Activated CD4-positive, alpha-beta T cell treated with anti-CD3 and anti-CD28 coated beads for 36 hours (primary cell): ENCODE measurements at regions of chr15 and their contacts with region 1.

Region 1: DNA sequence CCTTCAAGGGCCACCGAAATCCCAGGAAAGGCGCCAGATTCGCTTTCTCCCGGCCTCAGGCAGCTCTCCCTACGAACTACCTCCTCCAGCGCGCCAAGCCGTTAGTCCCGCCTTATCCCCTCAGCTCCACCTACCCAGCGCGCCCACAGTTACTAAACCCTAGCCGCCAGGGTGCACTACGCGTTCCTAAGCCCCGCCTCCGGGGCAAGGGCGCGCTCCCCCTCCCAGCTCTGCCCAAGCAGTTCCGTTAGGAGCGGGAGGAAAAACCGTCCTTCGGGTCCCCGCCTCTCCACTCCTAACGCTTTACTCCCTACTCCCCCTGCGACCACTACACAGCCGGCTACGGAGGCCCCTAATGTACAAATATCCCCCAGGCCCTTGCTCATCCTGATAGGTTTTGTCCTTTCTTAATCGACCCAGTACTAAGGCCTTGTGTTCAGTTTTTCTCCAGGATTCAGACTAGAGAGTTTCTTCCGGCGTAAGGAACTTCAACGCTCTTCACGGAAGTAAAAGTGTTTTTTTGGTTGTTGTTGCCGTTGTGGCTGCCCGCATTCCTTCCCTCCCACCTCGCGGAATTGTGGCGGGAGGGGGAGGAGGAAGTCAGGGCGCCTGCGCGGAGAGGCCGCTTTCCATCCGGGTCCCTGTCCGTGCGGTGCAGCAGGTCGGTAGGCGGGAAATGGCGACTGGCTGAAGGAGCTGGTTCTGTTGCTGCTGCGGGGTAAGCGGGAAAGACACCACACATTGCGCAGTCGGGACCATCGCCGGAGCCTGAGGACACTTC is at the start of gene CTDSPL2:
- DNase-seq: peak; percentile 97
- ATAC-seq: peak; percentile 98
- H3K4me3 Mint-ChIP-seq: peak within 1 kb of the TSS; percentile 98
- H3K27ac Mint-ChIP-seq: peak within 1 kb of the TSS; percentile 99
- H3K4me1 Mint-ChIP-seq: peaks cover 36% of the 10 kb centered on the region
- H3K27me3 Mint-ChIP-seq: no peaks in the 10 kb centered on the region
- total RNA-seq, gene CTDSPL2: 80.7 to 107 TPM

Region 2: DNA sequence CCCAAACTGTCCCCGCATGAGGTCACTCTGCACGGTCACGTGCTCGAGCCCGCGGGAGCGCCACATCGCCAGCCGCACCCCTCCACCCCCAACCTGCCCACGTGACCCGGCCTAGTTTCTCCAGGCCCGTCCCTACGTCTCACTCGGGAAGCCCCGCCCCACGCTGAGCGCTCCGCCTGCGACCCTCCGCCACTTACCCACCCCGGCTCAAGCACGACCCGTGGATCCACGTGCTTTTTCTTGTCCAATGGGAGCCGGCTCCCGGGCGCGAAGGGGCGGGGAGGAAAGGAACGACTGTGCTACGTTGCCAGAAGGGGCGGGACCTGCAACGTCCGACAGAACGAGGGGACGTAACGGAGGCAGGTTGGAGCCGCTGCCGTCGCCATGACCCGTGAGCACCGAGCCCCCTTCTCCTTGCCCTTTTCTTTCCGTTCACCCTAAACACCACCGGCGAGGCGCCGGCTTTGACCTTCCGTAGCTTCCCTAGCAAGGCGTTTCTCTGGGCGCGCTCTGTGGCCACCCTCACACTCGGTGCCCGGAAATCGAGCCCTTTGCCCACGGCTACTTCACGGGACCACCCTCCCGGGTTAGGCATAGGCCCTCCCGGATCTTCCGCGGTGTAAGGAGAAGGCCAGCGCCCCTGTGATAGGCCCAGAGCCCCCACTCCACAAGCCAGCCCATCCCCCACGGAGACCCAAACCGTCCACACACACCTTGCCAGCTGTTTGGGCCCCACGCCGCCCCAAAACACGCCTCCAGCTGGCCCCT is 635.0 kb before region 1 on chr15 and contains the start of gene SERF2:
- CTCF ChIA-PET with region 1: no interaction called
- POLR2A ChIA-PET with region 1: no interaction called
- intact Hi-C with region 1: loop called in 1 of 2 experiments (anchors 1 kb)
- DNase-seq: peak; percentile 100
- ATAC-seq: peak; percentile 98
- H3K4me3 Mint-ChIP-seq: peak within 1 kb of the TSS; percentile 97
- H3K27ac Mint-ChIP-seq: peak within 1 kb of the TSS; percentile 97
- H3K4me1 Mint-ChIP-seq: peaks cover 35% of the 10 kb centered on the region
- H3K27me3 Mint-ChIP-seq: no peaks in the 10 kb centered on the region
- total RNA-seq, gene SERF2: 710 to 718 TPM

Region 3: GRCh38 chr15:44308415-44308814 is 118.8 kb before region 1 on chr15:
- CTCF ChIA-PET with region 1: no interaction called
- POLR2A ChIA-PET with region 1: interaction called, 5 read pairs
- intact Hi-C with region 1: loop called (anchors 1 kb)
- DNase-seq: peak; percentile 62
- ATAC-seq: peak; percentile 90
- H3K4me3 Mint-ChIP-seq: peak overlapping the region; percentile 58
- H3K27ac Mint-ChIP-seq: peak overlapping the region; percentile 92
- H3K4me1 Mint-ChIP-seq: peaks cover 48% of the 10 kb centered on the region
- H3K27me3 Mint-ChIP-seq: no peaks in the 10 kb centered on the region

Region 4: GRCh38 chr15:44501768-44502366 is 74.7 kb after region 1 on chr15:
- CTCF ChIA-PET with region 1: interaction called, 11 read pairs
- POLR2A ChIA-PET with region 1: interaction called, 5 read pairs
- intact Hi-C with region 1: loop called (anchors 2 kb)
- DNase-seq: no peak
- ATAC-seq: peak; percentile 48
- H3K4me3 Mint-ChIP-seq: no peak overlapping the region
- H3K27ac Mint-ChIP-seq: no peak overlapping the region
- H3K4me1 Mint-ChIP-seq: peaks cover 22% of the 10 kb centered on the region
- H3K27me3 Mint-ChIP-seq: no peaks in the 10 kb centered on the region

Region 5: GRCh38 chr15:44663409-44664308 is 236.5 kb after region 1 on chr15 and contains the start of gene SPG11:
- CTCF ChIA-PET with region 1: no interaction called
- POLR2A ChIA-PET with region 1: no interaction called
- intact Hi-C with region 1: loop called in 1 of 2 experiments (anchors 1 kb)
- DNase-seq: peak; percentile 99
- ATAC-seq: peak; percentile 83
- H3K4me3 Mint-ChIP-seq: peak within 1 kb of the TSS; percentile 96
- H3K27ac Mint-ChIP-seq: peak within 1 kb of the TSS; percentile 98
- H3K4me1 Mint-ChIP-seq: peaks cover 57% of the 10 kb centered on the region
- H3K27me3 Mint-ChIP-seq: no peaks in the 10 kb centered on the region
- total RNA-seq, gene SPG11: 76.2 to 88.7 TPM

Region 6: GRCh38 chr15:45198337-45199135 is 771.4 kb after region 1 on chr15:
- CTCF ChIA-PET with region 1: no interaction called
- POLR2A ChIA-PET with region 1: no interaction called
- intact Hi-C with region 1: loop called in 1 of 2 experiments (anchors 5 kb)
- DNase-seq: peak; percentile 94
- ATAC-seq: peak; percentile 63
- H3K4me3 Mint-ChIP-seq: no peak overlapping the region
- H3K27ac Mint-ChIP-seq: no peak overlapping the region
- H3K4me1 Mint-ChIP-seq: peaks cover 14% of the 10 kb centered on the region
- H3K27me3 Mint-ChIP-seq: no peaks in the 10 kb centered on the region